Activated CD8-positive, alpha-beta T cell treated with anti-CD3 and anti-CD28 coated beads for 36 hours (primary cell): ENCODE measurements at regions of chr1 and their contacts with region 1.

Region 1: DNA sequence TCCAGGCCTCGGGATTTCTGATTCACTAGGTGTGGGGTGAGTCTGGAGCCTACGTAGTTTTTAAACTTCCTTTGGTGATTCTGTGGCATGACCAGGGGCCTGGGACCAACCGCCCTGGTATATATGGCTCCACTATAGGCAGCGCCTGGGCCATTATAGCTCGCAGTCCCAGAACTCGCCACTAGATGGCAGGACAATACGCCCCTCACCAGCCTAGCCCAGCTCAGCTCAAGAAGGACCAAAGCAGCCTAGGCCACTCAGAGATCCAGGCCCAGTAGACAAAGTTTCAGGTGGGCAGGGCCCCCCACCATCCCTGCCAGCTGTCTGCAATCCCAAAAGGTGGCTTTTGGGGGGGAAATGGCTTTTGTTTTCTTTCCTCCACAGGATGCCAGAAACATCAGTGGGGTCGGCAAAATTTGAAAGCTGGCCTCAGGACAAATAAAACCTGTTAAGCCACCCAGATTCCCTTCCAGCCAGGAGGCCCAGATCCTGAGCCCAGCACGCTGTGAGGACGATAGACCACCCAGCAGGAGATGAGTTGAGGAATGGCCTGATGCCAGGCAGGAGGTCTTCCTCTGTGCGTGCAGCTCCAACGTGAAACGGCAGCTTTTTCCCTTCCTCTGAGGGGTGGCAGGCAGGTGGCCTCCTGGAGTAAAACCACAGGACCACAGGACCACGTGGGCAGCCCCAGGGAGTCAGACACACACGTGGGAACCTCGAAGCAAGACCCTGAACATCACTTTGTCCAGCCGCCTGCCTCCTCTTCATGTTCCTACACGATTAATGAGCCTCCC is 24.8 kb upstream of the TMEM51 start:
- DNase-seq: peak; percentile 85
- ATAC-seq: peak; percentile 100
- H3K4me3 Mint-ChIP-seq: no peak overlapping the region
- H3K27ac Mint-ChIP-seq: no peak overlapping the region
- H3K4me1 Mint-ChIP-seq: no peaks in the 10 kb centered on the region
- H3K27me3 Mint-ChIP-seq: peaks cover 1% of the 10 kb centered on the region
- CTCF ChIP-seq: peak; percentile 81

Region 2: DNA sequence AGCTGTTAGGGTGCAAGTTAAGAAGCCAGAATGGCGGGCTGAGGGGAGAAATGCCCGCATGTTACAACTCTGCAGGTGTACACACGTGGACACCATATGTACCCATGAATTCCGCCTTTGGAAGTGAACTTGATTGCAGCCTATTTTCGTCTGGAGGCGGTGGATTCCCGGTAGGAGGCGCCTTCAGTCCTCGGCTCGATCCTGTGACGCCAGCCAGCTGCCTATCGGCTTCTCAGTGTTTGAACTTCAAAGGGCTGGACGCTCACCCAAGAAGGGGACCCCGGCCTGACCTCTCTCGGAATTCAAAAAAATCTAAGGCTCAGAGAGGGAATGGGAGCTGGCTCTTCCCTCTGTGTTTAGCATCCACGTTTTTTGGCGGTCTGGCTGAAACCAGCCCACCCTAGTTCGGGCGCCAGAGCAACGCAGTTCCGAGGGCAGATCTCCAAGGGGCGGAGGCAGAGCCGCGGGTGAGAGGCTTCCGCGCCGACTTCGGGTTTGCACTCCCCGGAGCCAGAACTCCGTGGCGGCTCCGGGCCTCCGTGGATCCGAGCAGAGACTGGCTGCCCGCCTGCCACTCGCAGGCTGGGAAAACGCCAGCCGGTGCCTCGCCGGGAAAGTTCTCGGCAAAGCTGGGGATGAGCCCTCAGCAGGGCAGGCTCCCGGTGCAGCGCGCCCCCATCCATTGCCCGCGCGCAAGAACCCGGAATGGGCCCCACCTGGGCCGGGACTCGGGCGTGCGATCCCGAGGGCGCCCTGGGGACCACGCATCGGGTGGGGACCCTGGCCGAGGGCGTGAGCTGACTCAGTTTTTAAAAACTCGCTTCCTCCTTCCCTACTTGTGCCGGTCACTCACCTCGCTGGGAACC is 23.8 kb after region 1 on chr1:
- CTCF ChIA-PET with region 1: interaction called, 18 read pairs
- POLR2A ChIA-PET with region 1: interaction called, 3 read pairs
- intact Hi-C with region 1: no loop called
- DNase-seq: peak; percentile 43
- ATAC-seq: no peak
- H3K4me3 Mint-ChIP-seq: peak overlapping the region; percentile 24
- H3K27ac Mint-ChIP-seq: no peak overlapping the region
- H3K4me1 Mint-ChIP-seq: peaks cover 23% of the 10 kb centered on the region
- H3K27me3 Mint-ChIP-seq: peaks cover 53% of the 10 kb centered on the region
- CTCF ChIP-seq: no peak

Region 3: DNA sequence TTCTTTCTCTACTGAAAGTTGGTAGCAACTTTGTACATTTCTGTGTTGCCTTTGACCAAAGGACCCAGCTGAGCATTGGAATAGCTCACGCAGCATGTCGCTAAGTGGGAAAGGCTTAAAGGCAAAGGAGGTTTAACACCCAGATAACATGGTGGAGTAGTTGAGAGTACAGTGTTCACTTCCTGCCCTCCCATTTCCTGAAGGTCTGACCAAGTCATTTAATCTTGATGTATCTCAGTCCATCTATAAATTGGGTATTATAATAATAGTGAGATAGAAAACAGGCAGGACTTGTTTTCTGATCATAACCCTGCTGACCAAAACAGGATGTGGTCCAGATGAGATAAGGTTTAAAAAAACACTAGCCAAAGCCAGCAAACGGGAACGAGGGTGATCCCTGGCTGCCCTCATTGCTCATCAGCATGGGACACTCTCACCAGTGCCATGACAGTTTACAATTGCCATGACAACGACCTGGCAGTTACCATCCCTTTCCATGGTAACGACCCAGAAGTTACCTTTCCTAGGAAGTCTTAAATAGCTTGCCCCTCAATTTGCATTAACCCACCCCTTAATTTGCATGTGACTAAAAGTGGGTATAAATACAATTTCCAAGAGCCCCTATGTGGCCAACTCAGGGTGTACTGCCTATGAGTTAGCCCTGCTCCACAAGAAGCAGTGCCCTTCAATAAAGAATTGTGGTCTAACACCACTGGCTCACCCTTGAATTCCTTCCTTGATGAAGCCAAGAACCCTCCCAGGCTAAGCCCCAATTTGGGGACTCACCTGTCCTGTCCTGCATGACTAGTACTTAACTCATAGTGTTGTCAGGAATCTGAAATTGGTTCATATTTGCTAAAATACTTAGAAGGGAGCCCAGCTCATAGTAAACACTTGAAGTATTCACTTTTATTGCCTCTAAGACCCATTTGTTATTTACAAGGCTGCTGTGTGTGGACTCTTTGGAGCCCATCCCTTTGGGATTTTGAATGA is 89.9 kb after region 1 on chr1:
- CTCF ChIA-PET with region 1: interaction called, 13 read pairs
- POLR2A ChIA-PET with region 1: no interaction called
- intact Hi-C with region 1: no loop called
- DNase-seq: peak; percentile 6
- ATAC-seq: peak; percentile 34
- H3K4me3 Mint-ChIP-seq: no peak overlapping the region
- H3K27ac Mint-ChIP-seq: no peak overlapping the region
- H3K4me1 Mint-ChIP-seq: peaks cover 5% of the 10 kb centered on the region
- H3K27me3 Mint-ChIP-seq: peaks cover 14% of the 10 kb centered on the region
- CTCF ChIP-seq: no peak

Region 4: DNA sequence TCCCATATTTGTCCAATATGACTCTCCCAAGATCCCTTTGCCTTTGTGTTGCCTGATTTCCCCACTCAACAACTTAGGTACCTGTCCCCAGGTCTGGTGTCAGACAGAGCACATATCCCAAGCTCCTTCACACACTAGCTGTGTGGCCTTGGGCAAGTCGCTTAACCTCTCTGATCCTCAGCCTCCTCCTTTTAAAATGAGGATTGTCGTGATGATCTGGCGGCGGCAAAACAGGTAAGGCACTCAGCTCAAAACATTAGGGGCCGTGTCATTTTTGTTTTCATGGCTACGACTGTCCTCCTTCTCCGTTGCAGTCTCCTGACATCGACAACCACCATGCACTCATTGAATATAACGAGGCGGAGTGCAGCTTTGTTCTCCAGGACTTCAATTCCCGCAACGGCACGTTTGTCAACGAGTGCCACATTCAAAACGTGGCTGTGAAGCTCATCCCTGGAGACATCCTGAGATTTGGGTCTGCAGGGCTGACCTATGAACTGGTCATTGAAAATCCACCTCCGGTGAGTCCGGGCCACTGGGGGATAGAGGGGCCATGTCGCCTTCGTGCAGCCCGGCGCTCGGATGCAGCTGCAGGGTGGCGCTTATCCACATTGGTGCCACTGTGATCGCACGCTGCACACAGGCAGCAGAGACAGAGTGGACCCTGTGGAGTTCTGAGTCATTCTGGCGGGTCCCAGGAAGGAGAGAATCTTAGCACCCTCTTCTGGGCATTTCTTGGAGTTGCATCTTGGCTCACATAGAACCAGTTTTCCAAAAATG is 143.5 kb after region 1 on chr1:
- CTCF ChIA-PET with region 1: interaction called, 118 read pairs
- POLR2A ChIA-PET with region 1: interaction called, 4 read pairs
- intact Hi-C with region 1: loop called (anchors 2 kb)
- DNase-seq: peak; percentile 68
- ATAC-seq: peak; percentile 97
- H3K4me3 Mint-ChIP-seq: no peak overlapping the region
- H3K27ac Mint-ChIP-seq: no peak overlapping the region
- H3K4me1 Mint-ChIP-seq: peaks cover 4% of the 10 kb centered on the region
- H3K27me3 Mint-ChIP-seq: peaks cover 27% of the 10 kb centered on the region
- CTCF ChIP-seq: peak; percentile 72

Region 5: GRCh38 chr1:15304701-15305467 is 176.2 kb after region 1 on chr1:
- CTCF ChIA-PET with region 1: interaction called, 64 read pairs
- POLR2A ChIA-PET with region 1: interaction called, 3 read pairs
- intact Hi-C with region 1: loop called (anchors 2 kb)
- DNase-seq: peak; percentile 84
- ATAC-seq: peak; percentile 77
- H3K4me3 Mint-ChIP-seq: no peak overlapping the region
- H3K27ac Mint-ChIP-seq: no peak overlapping the region
- H3K4me1 Mint-ChIP-seq: no peaks in the 10 kb centered on the region
- H3K27me3 Mint-ChIP-seq: no peaks in the 10 kb centered on the region
- CTCF ChIP-seq: peak; percentile 96